Heart right ventricle (tissue), 16 donors: ENCODE measurements at regions of chr2 and their contacts with region 1.

Region 1: DNA sequence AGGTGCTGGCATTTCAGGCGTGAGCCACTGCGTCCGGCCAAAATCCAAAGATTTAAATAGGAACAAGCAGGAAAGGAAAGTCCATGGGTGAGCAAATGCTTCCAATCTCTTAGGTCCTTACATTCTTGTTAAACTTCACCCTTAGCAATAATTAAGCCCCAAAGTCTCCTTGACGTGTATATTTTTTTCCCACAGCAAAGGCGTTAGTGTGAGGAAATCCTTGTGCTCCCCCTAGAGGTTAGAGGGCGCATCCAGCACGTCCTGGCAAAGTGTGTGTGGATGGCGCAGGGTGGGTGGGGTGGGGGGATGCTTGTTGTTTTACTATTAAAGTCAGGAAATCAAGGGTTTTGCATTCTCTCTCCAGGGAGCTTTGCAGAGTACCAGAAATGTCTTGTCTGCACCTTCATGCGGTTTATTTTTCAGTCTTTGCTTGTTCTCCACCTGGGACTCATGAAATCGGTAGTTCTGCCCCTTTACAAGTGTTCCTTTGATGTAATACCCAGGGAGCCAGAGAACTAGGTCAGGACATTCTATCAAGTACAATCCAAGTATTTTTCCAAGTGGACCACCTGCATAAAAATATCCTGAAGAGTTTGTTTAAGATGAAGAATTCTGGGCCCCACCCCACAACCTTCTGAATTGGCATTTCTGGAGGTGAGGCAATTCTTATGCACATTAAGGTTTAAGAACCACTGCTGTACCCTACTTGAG is 22.2 kb upstream of the ITSN2 start:
- DNase-seq: peak; percentile 24 to 64
- ATAC-seq: peak; percentile 68 to 92 (median 88)
- H3K4me3 ChIP-seq: no peak overlapping the region
- H3K27ac ChIP-seq: no peak overlapping the region
- H3K4me1 ChIP-seq: peaks cover 0 to 5% (median 0%) of the 10 kb centered on the region in 9 donors
- H3K27me3 ChIP-seq: peaks cover 0 to 3% (median 0%) of the 10 kb centered on the region in 7 donors
- CTCF ChIP-seq: peak; percentile 65 to 88 (median 81)

Region 2: GRCh38 chr2:23988371-23988770 is 394.1 kb before region 1 on chr2:
- intact Hi-C with region 1: loop called in 1 of 10 experiments (anchors 5 kb)
- DNase-seq: no peak
- ATAC-seq: no peak
- H3K4me3 ChIP-seq: no peak overlapping the region
- H3K27ac ChIP-seq: no peak overlapping the region
- H3K4me1 ChIP-seq: no peaks in the 10 kb centered on the region
- H3K27me3 ChIP-seq: no peaks in the 10 kb centered on the region
- CTCF ChIP-seq: peak in 7 of 9 donors; percentile 16 to 49 (median 33)

Region 3: GRCh38 chr2:24228470-24228869 is 154.0 kb before region 1 on chr2:
- intact Hi-C with region 1: loop called (anchors 2 to 10 kb)
- DNase-seq: no peak
- ATAC-seq: no peak
- H3K4me3 ChIP-seq: no peak overlapping the region
- H3K27ac ChIP-seq: no peak overlapping the region
- H3K4me1 ChIP-seq: no peaks in the 10 kb centered on the region
- H3K27me3 ChIP-seq: no peaks in the 10 kb centered on the region
- CTCF ChIP-seq: peak in 7 of 9 donors; percentile 19 to 57 (median 45)

Region 4: DNA sequence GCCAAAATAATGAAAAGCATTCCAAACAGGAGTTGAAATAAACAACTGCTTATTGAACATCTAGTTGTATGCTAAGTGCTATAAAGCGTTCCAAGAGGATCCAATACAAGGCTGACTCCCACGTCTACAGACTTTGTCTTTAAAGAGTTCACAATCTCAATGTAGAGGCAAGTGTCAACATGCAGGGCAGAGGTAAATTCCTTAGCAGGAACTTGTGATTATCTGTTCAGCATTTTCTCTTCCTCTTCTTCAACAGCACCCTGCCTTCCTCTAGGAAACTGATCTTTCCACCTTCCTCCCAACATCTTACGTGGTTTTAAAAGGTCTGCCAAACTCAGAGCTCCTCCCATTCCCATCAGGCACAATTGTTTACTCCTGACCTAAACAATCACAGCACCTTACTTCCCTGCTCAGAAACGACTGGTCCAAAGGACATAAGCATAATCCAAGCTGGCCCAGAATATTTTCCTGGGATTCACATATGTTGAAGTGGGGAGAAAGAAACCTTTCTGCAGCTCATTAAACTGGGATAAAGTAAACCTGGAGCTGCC is 106.1 kb before region 1 on chr2:
- intact Hi-C with region 1: no loop called
- DNase-seq: no peak
- ATAC-seq: no peak
- H3K4me3 ChIP-seq: no peak overlapping the region
- H3K27ac ChIP-seq: peak overlapping the region in 1 of 10 donors; percentile 38
- H3K4me1 ChIP-seq: peaks cover 0 to 34% (median 9%) of the 10 kb centered on the region in 9 donors
- H3K27me3 ChIP-seq: no peaks in the 10 kb centered on the region
- CTCF ChIP-seq: no peak